MCF 10A (cell line): ENCODE measurements at regions of chr13 and their contacts with region 1.

Region 1: DNA sequence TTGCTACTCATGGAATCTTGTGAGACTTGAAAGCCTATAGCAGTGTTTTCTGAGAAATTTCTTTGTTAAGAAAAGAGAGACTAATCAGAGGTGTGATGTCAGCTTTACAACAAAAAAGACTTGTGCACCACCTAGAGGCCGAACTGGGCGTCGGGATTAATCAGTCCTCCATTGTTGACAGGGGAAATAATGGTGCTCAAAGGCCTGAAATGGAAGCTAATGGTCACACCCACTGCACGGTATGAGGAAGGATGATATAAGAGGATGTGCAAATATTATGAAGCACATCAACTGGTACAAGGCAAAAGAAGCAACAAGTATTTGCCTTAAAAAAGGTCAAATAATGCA is 480.2 kb upstream of the MIR17HG start:
- DNase-seq: peak; percentile 84
- H3K4me3 Mint-ChIP-seq: no peak overlapping the region
- H3K27ac Mint-ChIP-seq: no peak overlapping the region
- H3K4me1 Mint-ChIP-seq: peaks cover 6% of the 10 kb centered on the region
- H3K27me3 Mint-ChIP-seq: no peaks in the 10 kb centered on the region
- CTCF ChIP-seq: peak; percentile 57

Region 2: GRCh38 chr13:89066868-89067466 is 1800.3 kb before region 1 on chr13:
- CTCF ChIA-PET with region 1: no interaction called
- POLR2A ChIA-PET with region 1: no interaction called
- intact Hi-C with region 1: loop called (anchors 10 kb)
- DNase-seq: peak; percentile 79
- H3K4me3 Mint-ChIP-seq: no peak overlapping the region
- H3K27ac Mint-ChIP-seq: no peak overlapping the region
- H3K4me1 Mint-ChIP-seq: peaks cover 6% of the 10 kb centered on the region
- H3K27me3 Mint-ChIP-seq: no peaks in the 10 kb centered on the region
- CTCF ChIP-seq: peak; percentile 60

Region 3: DNA sequence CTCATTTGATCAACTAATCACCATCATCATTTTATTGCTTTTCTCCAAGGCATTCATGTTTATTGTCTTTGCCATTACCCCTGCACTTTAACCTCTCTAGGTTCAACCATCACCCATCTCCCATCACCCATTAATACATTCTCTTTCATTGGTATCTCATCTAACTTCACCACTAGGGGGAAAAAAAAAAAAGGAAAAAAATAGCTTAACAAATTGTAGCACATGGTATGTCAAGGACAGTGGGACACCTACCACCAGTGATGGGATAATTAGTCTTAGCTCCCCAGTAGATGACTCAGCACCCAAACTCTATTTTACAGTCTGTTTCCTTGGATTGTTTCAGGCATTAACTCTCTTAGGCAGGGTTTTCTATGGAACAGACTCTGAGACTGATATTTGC is 1290.0 kb before region 1 on chr13:
- CTCF ChIA-PET with region 1: no interaction called
- POLR2A ChIA-PET with region 1: no interaction called
- intact Hi-C with region 1: loop called (anchors 10 kb)
- DNase-seq: no peak
- H3K4me3 Mint-ChIP-seq: no peak overlapping the region
- H3K27ac Mint-ChIP-seq: no peak overlapping the region
- H3K4me1 Mint-ChIP-seq: no peaks in the 10 kb centered on the region
- H3K27me3 Mint-ChIP-seq: no peaks in the 10 kb centered on the region
- CTCF ChIP-seq: no peak

Region 4: DNA sequence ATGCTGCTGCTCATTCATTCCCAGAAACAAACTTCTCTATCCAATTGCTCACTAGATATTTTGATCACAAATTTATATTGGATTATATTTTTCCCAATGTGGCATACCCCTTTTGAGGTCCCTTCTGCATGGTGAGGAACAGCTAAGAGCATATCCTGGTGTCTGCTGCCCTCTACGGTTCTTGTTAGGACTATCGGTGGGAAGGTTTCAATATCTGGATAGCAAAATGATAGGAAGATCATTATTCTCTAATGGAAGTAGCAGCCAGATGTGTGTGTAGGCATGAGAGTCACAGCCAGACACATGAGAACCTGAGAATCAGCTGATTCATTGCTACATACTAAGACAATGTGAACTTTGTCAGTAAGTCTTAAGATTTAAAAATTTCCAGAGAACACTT is 942.2 kb before region 1 on chr13:
- CTCF ChIA-PET with region 1: interaction called, 4 read pairs
- POLR2A ChIA-PET with region 1: no interaction called
- intact Hi-C with region 1: loop called (anchors 2 kb)
- DNase-seq: peak; percentile 61
- H3K4me3 Mint-ChIP-seq: no peak overlapping the region
- H3K27ac Mint-ChIP-seq: no peak overlapping the region
- H3K4me1 Mint-ChIP-seq: peaks cover 8% of the 10 kb centered on the region
- H3K27me3 Mint-ChIP-seq: no peaks in the 10 kb centered on the region
- CTCF ChIP-seq: peak; percentile 44

Region 5: GRCh38 chr13:90502153-90502552 is 365.2 kb before region 1 on chr13:
- CTCF ChIA-PET with region 1: interaction called, 11 read pairs
- POLR2A ChIA-PET with region 1: no interaction called
- intact Hi-C with region 1: no loop called
- DNase-seq: no peak
- H3K4me3 Mint-ChIP-seq: no peak overlapping the region
- H3K27ac Mint-ChIP-seq: no peak overlapping the region
- H3K4me1 Mint-ChIP-seq: no peaks in the 10 kb centered on the region
- H3K27me3 Mint-ChIP-seq: no peaks in the 10 kb centered on the region
- CTCF ChIP-seq: no peak

Region 6: DNA sequence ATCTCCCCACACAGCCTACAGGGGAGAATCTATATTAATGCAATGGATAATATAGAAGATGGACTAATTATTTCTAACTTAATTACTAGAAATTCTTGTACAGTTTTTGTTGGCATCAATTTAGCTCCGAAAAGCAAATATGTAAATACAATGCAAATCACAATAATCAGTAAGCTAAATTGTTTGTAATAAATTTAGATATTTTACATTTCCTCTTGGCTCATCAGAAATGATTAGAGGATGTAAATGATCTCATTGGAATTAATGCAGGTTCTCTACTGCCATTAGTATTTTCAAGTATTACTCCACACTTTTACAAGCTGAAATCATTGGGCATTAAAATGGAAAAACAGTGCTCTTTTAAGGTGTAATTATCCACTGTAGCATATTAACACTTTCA is 261.6 kb before region 1 on chr13:
- CTCF ChIA-PET with region 1: no interaction called
- POLR2A ChIA-PET with region 1: no interaction called
- intact Hi-C with region 1: no loop called
- DNase-seq: no peak
- H3K4me3 Mint-ChIP-seq: no peak overlapping the region
- H3K27ac Mint-ChIP-seq: no peak overlapping the region
- H3K4me1 Mint-ChIP-seq: no peaks in the 10 kb centered on the region
- H3K27me3 Mint-ChIP-seq: no peaks in the 10 kb centered on the region
- CTCF ChIP-seq: no peak

Region 7: DNA sequence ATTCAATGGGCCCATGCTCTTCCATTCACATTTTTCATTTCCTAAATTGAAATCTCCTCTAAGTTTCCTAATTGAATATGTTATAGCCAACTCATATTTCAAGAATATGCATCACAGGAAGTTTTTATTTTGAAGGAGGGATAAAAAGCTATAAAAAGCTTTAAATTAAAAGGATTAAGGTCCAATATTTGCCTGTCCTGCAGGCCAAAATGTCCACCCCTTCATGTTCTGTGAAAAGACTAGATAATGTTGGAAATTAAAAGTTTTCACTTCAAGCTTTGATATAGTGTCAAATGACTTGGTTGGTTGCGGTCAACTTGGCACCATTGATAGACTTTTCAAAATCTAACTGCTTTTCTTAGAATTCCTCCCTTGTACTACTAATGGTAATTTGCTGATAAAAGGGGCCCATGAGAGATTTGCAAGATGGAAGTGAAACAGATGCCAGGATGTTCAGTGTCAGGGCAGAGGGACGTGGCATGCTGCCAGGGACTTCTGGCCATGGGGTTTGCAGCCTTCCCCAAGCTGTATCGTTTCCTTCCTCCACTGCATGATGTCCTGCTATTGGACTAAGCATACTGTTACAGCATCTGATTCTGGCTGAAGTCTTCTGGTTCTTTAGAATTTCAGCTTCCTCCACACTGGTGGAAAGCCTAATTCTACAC is 67.1 kb before region 1 on chr13:
- CTCF ChIA-PET with region 1: no interaction called
- POLR2A ChIA-PET with region 1: no interaction called
- intact Hi-C with region 1: no loop called
- DNase-seq: no peak
- H3K4me3 Mint-ChIP-seq: no peak overlapping the region
- H3K27ac Mint-ChIP-seq: no peak overlapping the region
- H3K4me1 Mint-ChIP-seq: no peaks in the 10 kb centered on the region
- H3K27me3 Mint-ChIP-seq: no peaks in the 10 kb centered on the region
- CTCF ChIP-seq: no peak

Region 8: GRCh38 chr13:90968166-90968904 is 101.0 kb after region 1 on chr13:
- CTCF ChIA-PET with region 1: interaction called, 12 read pairs
- POLR2A ChIA-PET with region 1: no interaction called
- intact Hi-C with region 1: loop called (anchors 5 kb)
- DNase-seq: peak; percentile 46
- H3K4me3 Mint-ChIP-seq: no peak overlapping the region
- H3K27ac Mint-ChIP-seq: no peak overlapping the region
- H3K4me1 Mint-ChIP-seq: no peaks in the 10 kb centered on the region
- H3K27me3 Mint-ChIP-seq: no peaks in the 10 kb centered on the region
- CTCF ChIP-seq: peak; percentile 40

Region 9: GRCh38 chr13:91086936-91087716 is 219.8 kb after region 1 on chr13:
- CTCF ChIA-PET with region 1: no interaction called
- POLR2A ChIA-PET with region 1: no interaction called
- intact Hi-C with region 1: no loop called
- DNase-seq: no peak
- H3K4me3 Mint-ChIP-seq: no peak overlapping the region
- H3K27ac Mint-ChIP-seq: no peak overlapping the region
- H3K4me1 Mint-ChIP-seq: no peaks in the 10 kb centered on the region
- H3K27me3 Mint-ChIP-seq: peaks cover 35% of the 10 kb centered on the region
- CTCF ChIP-seq: no peak

Region 10: DNA sequence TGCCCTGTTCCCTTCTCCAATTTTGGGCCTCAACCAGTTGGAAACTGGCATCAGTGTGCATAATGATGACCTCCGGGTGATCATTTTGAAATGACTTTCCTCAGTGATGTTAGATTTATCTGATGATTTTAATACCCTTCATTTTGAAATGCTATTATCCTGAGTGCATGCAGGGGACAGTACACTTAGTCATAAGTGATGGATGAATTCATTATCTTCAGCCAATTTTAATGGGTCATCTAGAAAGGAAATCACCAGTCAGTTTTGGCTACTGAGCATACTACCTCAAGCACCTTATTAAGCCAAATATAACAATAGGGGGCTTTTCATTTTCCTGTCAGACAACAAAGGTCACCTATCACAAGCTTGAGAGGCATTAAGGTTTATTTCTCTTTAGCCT is 361.6 kb after region 1 on chr13:
- CTCF ChIA-PET with region 1: no interaction called
- POLR2A ChIA-PET with region 1: no interaction called
- intact Hi-C with region 1: no loop called
- DNase-seq: no peak
- H3K4me3 Mint-ChIP-seq: no peak overlapping the region
- H3K27ac Mint-ChIP-seq: no peak overlapping the region
- H3K4me1 Mint-ChIP-seq: no peaks in the 10 kb centered on the region
- H3K27me3 Mint-ChIP-seq: peaks cover 56% of the 10 kb centered on the region
- CTCF ChIP-seq: no peak